ENCODE measurements at regions of chr3 and their contacts with region 1.

Region 1: DNA sequence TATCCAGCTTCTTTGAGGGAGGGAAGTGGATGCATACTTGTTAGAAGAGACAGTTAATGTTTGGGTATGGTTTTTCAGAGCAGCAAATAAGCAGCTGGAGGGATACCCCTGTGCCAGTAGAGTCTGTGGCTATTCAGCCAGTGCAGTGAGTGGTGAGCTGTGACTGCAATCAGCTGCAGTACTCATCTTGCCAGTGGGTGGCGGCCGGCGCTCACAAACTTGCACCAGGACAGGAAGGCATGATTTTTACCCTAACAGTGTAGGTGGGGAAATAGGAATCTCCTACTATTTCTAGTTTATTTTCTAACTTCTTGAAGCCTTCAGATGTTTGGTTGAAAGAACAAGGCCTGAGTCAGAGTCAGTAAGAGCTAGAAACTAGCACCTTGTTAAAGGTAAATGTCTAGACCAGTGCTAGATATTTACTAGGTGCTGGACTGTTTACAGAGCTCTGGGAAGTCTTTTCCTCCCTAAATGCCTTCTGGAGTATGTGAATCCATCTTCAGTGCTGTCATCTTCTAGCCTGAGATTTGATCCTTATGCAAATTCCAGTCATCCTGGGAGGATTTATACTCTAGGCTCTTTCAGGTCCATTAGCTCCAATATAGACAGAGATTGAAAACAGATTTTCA is 23.6 kb downstream of the TIMP4 start:
- DNase-seq: peak; percentile 85
- ATAC-seq: peak; percentile 91
- H3K4me3 Mint-ChIP-seq: no peak overlapping the region
- H3K27ac Mint-ChIP-seq: no peak overlapping the region
- H3K4me1 Mint-ChIP-seq: no peaks in the 10 kb centered on the region
- H3K27me3 Mint-ChIP-seq: peaks cover 14% of the 10 kb centered on the region

Region 2: GRCh38 chr3:11969986-11970385 is 165.2 kb before region 1 on chr3:
- CTCF ChIA-PET with region 1: no interaction called
- POLR2A ChIA-PET with region 1: no interaction called
- intact Hi-C with region 1: no loop called
- DNase-seq: no peak
- ATAC-seq: no peak
- H3K4me3 Mint-ChIP-seq: no peak overlapping the region
- H3K27ac Mint-ChIP-seq: no peak overlapping the region
- H3K4me1 Mint-ChIP-seq: no peaks in the 10 kb centered on the region
- H3K27me3 Mint-ChIP-seq: peaks cover 9% of the 10 kb centered on the region

Region 3: GRCh38 chr3:12046406-12046805 is 88.7 kb before region 1 on chr3:
- CTCF ChIA-PET with region 1: no interaction called
- POLR2A ChIA-PET with region 1: no interaction called
- intact Hi-C with region 1: no loop called
- DNase-seq: no peak
- ATAC-seq: no peak
- H3K4me3 Mint-ChIP-seq: no peak overlapping the region
- H3K27ac Mint-ChIP-seq: no peak overlapping the region
- H3K4me1 Mint-ChIP-seq: no peaks in the 10 kb centered on the region
- H3K27me3 Mint-ChIP-seq: peaks cover 18% of the 10 kb centered on the region

Region 4: DNA sequence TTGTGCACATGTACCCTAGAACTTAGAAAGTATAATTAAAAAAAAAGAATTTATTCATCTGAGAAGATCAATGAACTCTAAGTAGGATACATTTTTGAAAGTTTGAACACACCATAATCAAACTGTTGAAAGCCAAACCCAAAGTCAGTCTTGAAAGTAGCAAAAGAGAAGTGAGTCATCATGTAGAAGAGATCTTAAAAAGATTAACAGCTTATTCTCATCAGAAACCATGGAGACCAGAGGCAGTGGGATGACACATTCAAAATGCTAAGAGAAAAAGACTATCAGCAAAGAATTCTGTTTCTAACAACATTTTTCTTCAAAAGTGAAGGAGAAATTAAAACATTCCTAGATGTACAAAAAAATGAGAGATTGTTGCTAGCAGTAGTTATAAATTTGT is 37.2 kb before region 1 on chr3:
- CTCF ChIA-PET with region 1: no interaction called
- POLR2A ChIA-PET with region 1: no interaction called
- intact Hi-C with region 1: no loop called
- DNase-seq: no peak
- ATAC-seq: peak; percentile 44
- H3K4me3 Mint-ChIP-seq: no peak overlapping the region
- H3K27ac Mint-ChIP-seq: no peak overlapping the region
- H3K4me1 Mint-ChIP-seq: no peaks in the 10 kb centered on the region
- H3K27me3 Mint-ChIP-seq: peaks cover 12% of the 10 kb centered on the region

Region 5: DNA sequence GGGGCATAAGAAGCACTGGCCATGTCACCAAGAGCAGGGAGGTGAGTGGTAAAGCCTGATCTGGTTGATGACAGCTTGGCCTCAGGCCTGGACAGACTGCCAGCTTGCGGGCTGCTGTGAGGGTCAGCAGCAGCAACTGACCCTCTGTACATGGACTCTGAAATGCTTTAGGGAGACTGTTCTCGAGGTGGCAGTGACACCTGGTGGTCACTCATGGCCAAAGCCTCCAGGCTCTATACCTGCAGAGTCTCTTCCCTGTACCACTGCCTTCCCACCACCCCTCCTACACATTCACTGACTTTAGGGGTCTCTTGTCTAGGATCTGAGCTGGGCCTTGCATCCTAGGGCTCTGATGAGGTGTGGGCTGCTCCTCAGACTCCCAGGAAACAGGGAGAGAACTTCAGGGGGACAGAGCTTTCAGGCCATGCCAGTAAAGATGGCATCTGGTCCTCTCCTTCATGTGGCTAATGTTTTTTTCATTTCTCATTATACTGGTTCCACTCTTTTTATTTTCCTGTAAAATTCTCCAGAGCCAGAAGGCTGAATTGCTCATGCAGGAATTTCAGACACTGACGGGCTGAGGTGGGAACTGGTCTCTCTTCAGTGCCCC is 40.8 kb after region 1 on chr3:
- CTCF ChIA-PET with region 1: interaction called, 81 read pairs
- POLR2A ChIA-PET with region 1: no interaction called
- intact Hi-C with region 1: loop called (anchors 1 kb)
- DNase-seq: peak; percentile 69
- ATAC-seq: peak; percentile 18
- H3K4me3 Mint-ChIP-seq: no peak overlapping the region
- H3K27ac Mint-ChIP-seq: no peak overlapping the region
- H3K4me1 Mint-ChIP-seq: peaks cover 17% of the 10 kb centered on the region
- H3K27me3 Mint-ChIP-seq: peaks cover 5% of the 10 kb centered on the region

Region 6: GRCh38 chr3:12287727-12288191 is 152.6 kb after region 1 on chr3:
- CTCF ChIA-PET with region 1: interaction called, 5 read pairs
- POLR2A ChIA-PET with region 1: interaction called, 3 read pairs
- intact Hi-C with region 1: loop called in 1 of 2 experiments (anchors 5 kb)
- DNase-seq: peak; percentile 44
- ATAC-seq: peak; percentile 70
- H3K4me3 Mint-ChIP-seq: peak overlapping the region; percentile 52
- H3K27ac Mint-ChIP-seq: no peak overlapping the region
- H3K4me1 Mint-ChIP-seq: peaks cover 4% of the 10 kb centered on the region
- H3K27me3 Mint-ChIP-seq: peaks cover 47% of the 10 kb centered on the region

Region 7: GRCh38 chr3:12325586-12326515 is 190.7 kb after region 1 on chr3:
- CTCF ChIA-PET with region 1: interaction called, 4 read pairs
- POLR2A ChIA-PET with region 1: no interaction called
- intact Hi-C with region 1: loop called in 1 of 2 experiments (anchors 5 kb)
- DNase-seq: no peak
- ATAC-seq: peak; percentile 33
- H3K4me3 Mint-ChIP-seq: no peak overlapping the region
- H3K27ac Mint-ChIP-seq: no peak overlapping the region
- H3K4me1 Mint-ChIP-seq: peaks cover 2% of the 10 kb centered on the region
- H3K27me3 Mint-ChIP-seq: peaks cover 21% of the 10 kb centered on the region

Region 8: GRCh38 chr3:12719984-12720898 is 585.1 kb after region 1 on chr3:
- CTCF ChIA-PET with region 1: interaction called, 4 read pairs
- POLR2A ChIA-PET with region 1: no interaction called
- intact Hi-C with region 1: loop called in 1 of 2 experiments (anchors 2 kb)
- DNase-seq: peak; percentile 80
- ATAC-seq: peak; percentile 74
- H3K4me3 Mint-ChIP-seq: peak overlapping the region; percentile 36
- H3K27ac Mint-ChIP-seq: no peak overlapping the region
- H3K4me1 Mint-ChIP-seq: peaks cover 9% of the 10 kb centered on the region
- H3K27me3 Mint-ChIP-seq: no peaks in the 10 kb centered on the region

Measured in activated CD4-positive, alpha-beta T cell treated with anti-CD3 and anti-CD28 coated beads for 36 hours (primary cell).